Right cardiac atrium (tissue), 5 donors: ENCODE measurements at regions of chr10 and their contacts with region 1.

Region 1: GRCh38 chr10:77641788-77642397 is 4.3 kb upstream of the KCNMA1 start:
- DNase-seq: peak in 1 of 3 donors; percentile 35
- ATAC-seq: no peak
- H3K4me3 ChIP-seq: no peak overlapping the region
- H3K27ac ChIP-seq: no peak overlapping the region
- H3K4me1 ChIP-seq: no peaks in the 10 kb centered on the region
- H3K27me3 ChIP-seq: peaks cover 3% of the 10 kb centered on the region

Region 2: DNA sequence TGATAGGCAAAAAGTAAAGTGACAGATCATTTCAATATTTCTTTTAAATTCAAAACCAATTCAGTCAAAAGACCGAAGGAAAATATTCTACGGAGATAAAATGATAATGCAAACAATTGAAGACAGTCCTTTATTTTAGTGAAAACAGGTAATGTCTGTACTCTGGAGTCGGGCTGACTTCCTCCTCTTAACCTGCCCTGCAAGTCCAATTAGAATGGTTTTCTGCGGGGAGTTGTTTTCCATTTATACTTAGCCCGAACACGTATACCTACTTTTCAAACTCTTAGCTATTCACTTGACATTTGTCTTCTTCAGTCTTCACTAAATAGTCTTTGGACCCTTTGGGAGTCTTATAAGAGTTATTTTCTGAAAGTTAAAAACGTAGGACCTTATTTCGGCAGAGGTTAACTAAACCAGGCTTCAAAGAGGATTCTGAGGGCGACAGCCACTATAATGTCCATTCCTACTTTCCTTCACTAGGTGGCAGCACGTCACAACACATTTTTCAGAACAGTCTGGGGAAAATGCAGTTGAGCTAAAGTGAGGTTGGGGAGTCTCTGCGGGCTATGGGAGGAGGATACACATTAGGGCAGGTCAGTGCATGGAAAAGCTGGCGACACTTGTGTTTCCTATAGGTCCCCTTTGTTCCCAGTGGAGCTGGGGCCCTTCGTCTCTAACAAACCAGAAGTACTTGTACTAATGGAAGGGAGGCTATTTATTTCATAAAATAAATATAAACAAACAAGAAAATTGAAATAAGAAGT is 476.3 kb before region 1 on chr10:
- intact Hi-C with region 1: loop called in 3 of 4 experiments (anchors 5 kb)
- DNase-seq: no peak
- ATAC-seq: peak in 1 of 2 donors; percentile 70
- H3K4me3 ChIP-seq: no peak overlapping the region
- H3K27ac ChIP-seq: no peak overlapping the region
- H3K4me1 ChIP-seq: no peaks in the 10 kb centered on the region
- H3K27me3 ChIP-seq: no peaks in the 10 kb centered on the region

Region 3: DNA sequence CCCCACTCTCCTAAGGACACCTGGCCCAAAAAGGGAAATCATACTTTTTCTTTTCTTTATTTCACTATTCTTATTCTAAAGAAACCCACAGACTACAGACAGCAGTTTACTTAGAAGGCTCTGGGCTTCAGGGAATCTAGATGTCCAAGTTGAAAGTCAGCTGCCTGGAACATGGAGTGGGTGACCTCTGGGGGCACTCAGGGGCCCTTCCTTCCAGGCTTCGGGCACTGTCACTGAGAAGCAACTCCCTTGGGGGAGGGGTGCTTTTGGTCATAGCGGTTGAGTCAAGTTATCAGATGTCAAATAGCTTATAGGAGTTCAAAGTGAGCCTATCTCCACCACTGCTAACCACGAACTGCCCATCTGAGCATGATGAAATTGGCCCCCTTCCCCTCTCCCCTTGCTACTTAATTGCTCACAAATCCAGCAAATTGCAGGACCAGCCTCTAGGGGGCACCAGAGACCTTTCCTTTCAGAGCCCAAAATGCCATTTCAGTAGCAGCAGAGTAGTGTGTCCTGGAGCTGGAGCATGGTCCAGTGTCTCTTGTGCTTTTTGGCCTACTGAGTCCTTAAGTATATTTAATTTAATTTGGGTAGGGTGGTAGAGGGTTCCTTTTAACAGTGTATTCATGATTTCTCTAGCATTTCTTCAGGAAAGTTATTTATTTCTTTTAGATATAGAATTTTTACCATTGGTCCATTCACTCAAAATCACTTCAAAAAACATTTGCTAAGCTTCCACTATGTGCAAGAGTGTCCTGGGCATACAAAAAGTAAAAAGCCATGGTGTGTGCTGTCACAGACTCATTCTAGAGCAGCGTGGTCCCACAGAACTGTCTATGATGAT is 468.1 kb before region 1 on chr10:
- intact Hi-C with region 1: loop called (anchors 5 kb)
- DNase-seq: peak; percentile 60 to 87 (median 75)
- ATAC-seq: peak; percentile 70 to 72
- H3K4me3 ChIP-seq: no peak overlapping the region
- H3K27ac ChIP-seq: no peak overlapping the region
- H3K4me1 ChIP-seq: no peaks in the 10 kb centered on the region
- H3K27me3 ChIP-seq: no peaks in the 10 kb centered on the region

Region 4: GRCh38 chr10:77179015-77179695 is 462.7 kb before region 1 on chr10:
- intact Hi-C with region 1: loop called in 3 of 4 experiments (anchors 5 kb)
- DNase-seq: peak in 2 of 3 donors; percentile 49 to 50
- ATAC-seq: peak; percentile 56 to 66
- H3K4me3 ChIP-seq: no peak overlapping the region
- H3K27ac ChIP-seq: no peak overlapping the region
- H3K4me1 ChIP-seq: no peaks in the 10 kb centered on the region
- H3K27me3 ChIP-seq: no peaks in the 10 kb centered on the region

Region 5: DNA sequence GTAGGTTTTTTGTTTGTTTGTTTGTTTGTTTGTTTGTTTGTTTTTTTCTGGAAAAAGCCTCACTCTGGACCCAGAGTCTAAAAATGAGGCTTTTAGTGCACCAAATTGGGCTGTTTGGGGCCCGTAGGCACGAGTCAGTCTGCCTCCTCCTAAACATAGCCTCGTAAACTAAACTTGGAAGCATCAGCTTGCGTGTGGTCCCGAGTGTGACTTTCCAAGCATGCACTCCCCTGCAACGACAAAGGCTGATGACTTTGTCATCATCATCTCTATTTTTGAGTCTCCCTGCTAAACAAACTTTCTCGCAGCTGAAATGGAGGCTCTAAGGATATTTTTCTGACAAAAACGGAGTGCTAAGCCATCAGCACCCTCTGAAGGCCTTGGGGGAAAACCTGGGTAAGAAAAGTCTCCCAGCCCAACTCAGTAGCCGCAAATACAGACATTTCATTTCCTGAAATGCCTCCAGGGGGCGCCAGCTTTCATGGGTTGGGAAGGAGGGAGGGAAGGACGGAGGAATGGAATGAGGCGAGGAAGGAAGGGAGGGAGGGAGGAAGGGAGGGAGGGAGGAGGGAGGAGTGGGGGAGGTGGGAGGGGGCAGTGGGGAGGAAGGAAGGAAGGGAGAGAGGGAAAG is 250.2 kb before region 1 on chr10:
- intact Hi-C with region 1: loop called (anchors 5 kb)
- DNase-seq: peak; percentile 75 to 86 (median 86)
- ATAC-seq: peak; percentile 61 to 67
- H3K4me3 ChIP-seq: no peak overlapping the region
- H3K27ac ChIP-seq: no peak overlapping the region
- H3K4me1 ChIP-seq: no peaks in the 10 kb centered on the region
- H3K27me3 ChIP-seq: no peaks in the 10 kb centered on the region

Region 6: DNA sequence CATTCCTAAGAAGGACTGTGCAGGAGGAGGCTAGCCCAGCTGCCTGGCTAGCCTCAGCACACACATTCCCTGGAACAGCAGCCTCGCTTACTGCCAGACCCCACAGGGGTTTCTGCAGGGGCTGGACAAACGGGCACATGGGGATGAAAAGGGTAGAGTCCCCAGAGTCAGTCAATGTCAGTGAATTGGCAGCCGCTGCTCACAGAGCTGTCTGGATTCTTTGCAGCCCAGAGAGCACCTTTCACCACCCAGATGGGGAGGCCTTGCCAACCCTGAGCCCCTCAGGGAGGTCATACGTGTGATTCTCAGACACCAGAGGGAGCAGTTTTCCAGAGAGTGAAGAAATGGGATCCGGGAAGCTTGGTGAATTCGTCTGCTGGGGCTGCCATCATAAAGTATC is 147.6 kb before region 1 on chr10:
- intact Hi-C with region 1: loop called in 1 of 4 experiments (anchors 2 kb)
- DNase-seq: no peak
- ATAC-seq: no peak
- H3K4me3 ChIP-seq: no peak overlapping the region
- H3K27ac ChIP-seq: no peak overlapping the region
- H3K4me1 ChIP-seq: no peaks in the 10 kb centered on the region
- H3K27me3 ChIP-seq: no peaks in the 10 kb centered on the region

Region 7: GRCh38 chr10:77702166-77702565 is 60.3 kb after region 1 on chr10:
- intact Hi-C with region 1: no loop called
- DNase-seq: no peak
- ATAC-seq: no peak
- H3K4me3 ChIP-seq: no peak overlapping the region
- H3K27ac ChIP-seq: no peak overlapping the region
- H3K4me1 ChIP-seq: no peaks in the 10 kb centered on the region
- H3K27me3 ChIP-seq: peaks cover 3% of the 10 kb centered on the region